Activated CD8-positive, alpha-beta memory T cell treated with anti-CD3 and anti-CD28 coated beads, Interleukin-2, amount 10 ng/mL, durations not matched to agents 7 days and 5 days (primary cell): ENCODE measurements at regions of chr15 and their contacts with region 1.

Region 1: GRCh38 chr15:89874926-89875564 is 18.7 kb downstream of the AP3S2 start:
- DNase-seq: peak; percentile 88
- ATAC-seq: peak; percentile 100
- H3K4me3 Mint-ChIP-seq: no peak overlapping the region
- H3K27ac Mint-ChIP-seq: no peak overlapping the region
- H3K4me1 Mint-ChIP-seq: peaks cover 3% of the 10 kb centered on the region
- H3K27me3 Mint-ChIP-seq: no peaks in the 10 kb centered on the region

Region 2: GRCh38 chr15:89740137-89740536 is 134.9 kb before region 1 on chr15:
- CTCF ChIA-PET with region 1: interaction called, 61 read pairs
- DNase-seq: peak; percentile 71
- ATAC-seq: peak; percentile 95
- H3K4me3 Mint-ChIP-seq: no peak overlapping the region
- H3K27ac Mint-ChIP-seq: no peak overlapping the region
- H3K4me1 Mint-ChIP-seq: peaks cover 3% of the 10 kb centered on the region
- H3K27me3 Mint-ChIP-seq: peaks cover 2% of the 10 kb centered on the region

Region 3: DNA sequence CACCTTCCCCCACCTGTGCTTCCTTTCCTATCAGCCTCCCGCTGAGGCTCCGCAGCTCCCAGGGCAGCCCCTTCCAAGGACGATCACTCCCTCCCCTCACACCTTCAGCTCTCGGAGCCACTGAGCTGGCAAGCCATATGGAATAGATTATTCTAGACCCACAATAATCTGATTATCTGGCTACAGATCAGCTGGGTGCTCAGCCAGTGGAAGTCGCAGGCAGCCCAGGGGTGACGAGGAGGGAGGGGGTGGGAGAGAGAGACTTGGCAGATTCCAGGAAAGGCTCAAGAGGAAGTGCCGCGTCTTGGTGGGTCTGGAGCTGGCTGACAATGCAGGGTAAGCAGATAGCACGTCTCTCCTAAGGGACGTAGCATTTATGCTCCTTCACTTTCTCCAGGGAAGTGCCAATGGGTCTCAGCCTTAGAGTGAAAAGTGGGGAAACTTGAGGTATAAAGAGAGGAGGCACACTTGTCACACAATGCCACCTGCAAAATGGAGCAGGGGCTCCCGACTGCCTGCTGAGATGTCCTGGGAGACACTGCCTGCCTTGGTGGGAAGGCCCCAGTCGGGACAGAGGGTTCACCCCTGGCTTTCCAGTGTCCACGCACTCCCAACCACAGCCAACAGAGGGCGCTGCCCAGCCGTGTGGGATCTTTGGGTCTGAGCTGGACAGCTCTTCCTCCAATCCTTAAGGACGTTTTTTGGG is 114.6 kb before region 1 on chr15:
- CTCF ChIA-PET with region 1: interaction called, 113 read pairs
- DNase-seq: peak; percentile 81
- ATAC-seq: peak; percentile 87
- H3K4me3 Mint-ChIP-seq: no peak overlapping the region
- H3K27ac Mint-ChIP-seq: no peak overlapping the region
- H3K4me1 Mint-ChIP-seq: peaks cover 6% of the 10 kb centered on the region
- H3K27me3 Mint-ChIP-seq: peaks cover 7% of the 10 kb centered on the region

Region 4: GRCh38 chr15:89863918-89864317 is 11.1 kb before region 1 on chr15:
- CTCF ChIA-PET with region 1: interaction called, 19 read pairs
- DNase-seq: no peak
- ATAC-seq: no peak
- H3K4me3 Mint-ChIP-seq: no peak overlapping the region
- H3K27ac Mint-ChIP-seq: no peak overlapping the region
- H3K4me1 Mint-ChIP-seq: peaks cover 12% of the 10 kb centered on the region
- H3K27me3 Mint-ChIP-seq: no peaks in the 10 kb centered on the region

Region 5: GRCh38 chr15:89893696-89894455 is 18.8 kb after region 1 on chr15 and contains the start of gene AP3S2:
- CTCF ChIA-PET with region 1: interaction called, 61 read pairs
- DNase-seq: peak; percentile 94
- ATAC-seq: peak; percentile 97
- H3K4me3 Mint-ChIP-seq: peak within 1 kb of the TSS; percentile 100
- H3K27ac Mint-ChIP-seq: peak within 1 kb of the TSS; percentile 95
- H3K4me1 Mint-ChIP-seq: peaks cover 33% of the 10 kb centered on the region
- H3K27me3 Mint-ChIP-seq: peaks cover 2% of the 10 kb centered on the region
- total RNA-seq, gene AP3S2: 22.2 to 26.5 TPM